Activated T-helper 1 cell treated with anti-CD3 and anti-CD28 coated beads, Interleukin-12 subunit alpha, Interleukin-12 subunit beta, Interleukin-2, Interleukin-4 antibody, amounts not matched to agents 30 ng/mL and 10 ng/mL and 1 ng/mL, durations not matched to agents 14 hours and 24 hours and 36 hours (primary cell): ENCODE measurements at regions of chr7 and their contacts with region 1.

Region 1: DNA sequence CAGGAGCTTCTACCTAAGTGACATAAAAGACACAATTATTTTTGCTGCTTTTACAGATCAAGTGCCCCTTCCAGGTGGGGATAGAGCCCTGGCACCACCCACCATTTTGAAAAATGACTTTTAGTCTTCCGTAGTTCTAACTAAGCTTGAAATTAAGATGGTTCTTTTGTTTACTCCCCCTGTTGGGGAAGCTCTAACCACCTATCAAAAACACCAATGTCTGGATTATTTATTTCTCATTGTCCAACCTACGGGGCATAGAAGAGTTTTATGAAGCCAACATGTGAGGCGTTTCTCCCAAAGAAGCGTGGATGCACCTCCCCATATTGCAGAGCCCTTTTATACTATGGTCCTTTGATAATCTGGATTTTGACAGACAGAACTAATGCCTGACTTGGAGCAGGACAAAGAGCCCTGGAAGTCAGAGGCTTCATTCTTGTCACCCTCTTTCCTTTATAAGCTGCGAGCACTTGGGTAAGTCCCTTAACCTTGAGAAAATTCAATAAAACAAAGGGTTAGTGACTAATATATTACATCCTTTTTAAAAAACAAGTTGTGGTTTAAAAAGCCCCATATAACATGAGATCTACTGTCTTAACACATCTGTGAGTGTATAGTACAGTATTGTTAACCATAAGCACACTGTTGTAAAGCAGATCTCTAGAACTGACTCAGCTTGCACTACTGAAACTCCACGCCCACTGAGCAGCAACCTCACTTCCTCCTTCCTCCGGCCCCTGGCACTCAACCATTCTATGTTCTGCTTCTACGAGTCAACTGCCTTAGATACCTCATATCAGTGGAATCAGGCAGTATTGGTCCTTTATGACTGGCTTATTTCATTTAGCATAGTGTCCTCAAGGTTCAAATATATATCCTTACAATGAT is 67.5 kb downstream of the ATXN7L1 start:
- DNase-seq: peak; percentile 77
- H3K4me3 Mint-ChIP-seq: peak overlapping the region; percentile 45
- H3K27ac Mint-ChIP-seq: peak overlapping the region; percentile 75
- H3K4me1 Mint-ChIP-seq: peaks cover 77% of the 10 kb centered on the region
- H3K27me3 Mint-ChIP-seq: peaks cover 1% of the 10 kb centered on the region

Region 2: DNA sequence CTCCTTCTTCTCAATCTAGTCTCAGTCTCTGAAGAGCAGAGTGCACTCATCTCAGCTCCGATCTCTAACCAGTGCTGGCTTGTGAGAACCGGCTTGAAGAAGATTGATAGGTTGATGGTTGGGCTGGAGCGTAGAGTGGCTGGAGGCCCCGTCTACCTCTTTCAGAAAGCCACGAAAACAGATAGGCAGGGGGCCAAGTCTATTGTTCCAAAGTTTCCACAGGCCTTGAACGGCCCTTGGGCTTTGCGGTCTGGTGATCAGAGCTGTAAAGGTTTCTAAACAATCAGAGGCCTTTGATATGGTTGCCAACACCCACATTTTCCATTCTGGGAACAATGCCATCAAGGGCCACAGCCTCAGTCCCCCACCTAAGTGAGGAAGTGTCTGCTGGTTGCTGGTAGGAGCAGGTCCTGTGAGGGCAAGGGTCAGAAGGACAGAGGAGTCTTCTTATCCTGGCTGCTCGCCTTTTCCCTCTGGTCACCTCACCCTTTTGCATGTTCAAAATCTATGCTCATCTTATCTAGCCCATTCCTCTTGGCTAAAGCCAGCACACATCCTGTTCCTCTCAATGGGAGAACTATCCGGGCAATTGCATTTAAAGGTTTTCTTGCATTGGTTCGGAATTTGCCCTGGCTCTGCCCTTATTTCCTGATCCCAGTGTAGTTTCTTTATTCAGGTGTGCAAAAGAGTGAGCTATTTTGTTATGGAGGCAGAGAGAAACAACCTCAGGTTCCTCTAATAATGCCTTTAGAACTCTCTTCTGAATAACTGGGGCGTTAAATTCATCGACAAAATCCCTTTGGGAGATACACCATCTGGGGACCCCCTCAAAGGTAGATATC is 865.2 kb before region 1 on chr7:
- intact Hi-C with region 1: loop called (anchors 1 kb)
- DNase-seq: peak; percentile 70
- H3K4me3 Mint-ChIP-seq: peak overlapping the region; percentile 96
- H3K27ac Mint-ChIP-seq: peak overlapping the region; percentile 100
- H3K4me1 Mint-ChIP-seq: peaks cover 72% of the 10 kb centered on the region
- H3K27me3 Mint-ChIP-seq: peaks cover 2% of the 10 kb centered on the region

Region 3: DNA sequence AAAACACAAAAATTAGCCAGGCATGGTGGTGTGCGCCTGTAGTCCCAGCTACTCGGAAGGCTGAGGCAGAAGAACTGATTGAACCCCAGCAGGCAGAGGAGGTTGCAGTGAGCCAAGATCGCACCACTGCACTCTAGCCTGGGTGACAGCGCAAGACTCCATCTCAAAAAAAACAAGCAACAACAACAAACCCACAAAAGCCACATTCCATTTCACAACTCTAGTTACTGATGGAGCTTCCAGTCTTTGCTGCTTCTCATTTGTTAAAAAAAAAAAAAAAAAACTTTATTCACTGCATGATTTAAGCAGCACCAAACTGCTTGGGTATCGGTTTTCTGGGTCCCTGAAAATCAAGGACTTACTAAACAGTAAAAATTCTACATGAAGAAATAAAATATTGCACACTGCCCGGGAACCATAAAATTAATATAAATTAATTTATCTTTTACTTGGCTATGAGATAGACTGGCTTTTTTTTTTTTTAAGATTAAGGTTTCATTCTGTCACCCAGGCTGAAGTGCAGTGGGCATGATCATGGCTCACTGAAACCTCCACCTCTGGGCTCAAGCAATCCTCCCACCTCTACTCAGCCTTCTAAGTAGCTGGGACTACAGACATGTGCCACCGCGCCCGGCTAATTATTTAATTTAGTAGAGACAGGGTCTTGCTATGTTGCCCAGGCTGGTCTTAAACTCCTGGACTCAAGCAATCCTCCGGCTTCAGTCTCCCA is 462.2 kb before region 1 on chr7:
- intact Hi-C with region 1: no loop called
- DNase-seq: peak; percentile 35
- H3K4me3 Mint-ChIP-seq: peak overlapping the region; percentile 42
- H3K27ac Mint-ChIP-seq: peak overlapping the region; percentile 52
- H3K4me1 Mint-ChIP-seq: peaks cover 40% of the 10 kb centered on the region
- H3K27me3 Mint-ChIP-seq: no peaks in the 10 kb centered on the region

Region 4: DNA sequence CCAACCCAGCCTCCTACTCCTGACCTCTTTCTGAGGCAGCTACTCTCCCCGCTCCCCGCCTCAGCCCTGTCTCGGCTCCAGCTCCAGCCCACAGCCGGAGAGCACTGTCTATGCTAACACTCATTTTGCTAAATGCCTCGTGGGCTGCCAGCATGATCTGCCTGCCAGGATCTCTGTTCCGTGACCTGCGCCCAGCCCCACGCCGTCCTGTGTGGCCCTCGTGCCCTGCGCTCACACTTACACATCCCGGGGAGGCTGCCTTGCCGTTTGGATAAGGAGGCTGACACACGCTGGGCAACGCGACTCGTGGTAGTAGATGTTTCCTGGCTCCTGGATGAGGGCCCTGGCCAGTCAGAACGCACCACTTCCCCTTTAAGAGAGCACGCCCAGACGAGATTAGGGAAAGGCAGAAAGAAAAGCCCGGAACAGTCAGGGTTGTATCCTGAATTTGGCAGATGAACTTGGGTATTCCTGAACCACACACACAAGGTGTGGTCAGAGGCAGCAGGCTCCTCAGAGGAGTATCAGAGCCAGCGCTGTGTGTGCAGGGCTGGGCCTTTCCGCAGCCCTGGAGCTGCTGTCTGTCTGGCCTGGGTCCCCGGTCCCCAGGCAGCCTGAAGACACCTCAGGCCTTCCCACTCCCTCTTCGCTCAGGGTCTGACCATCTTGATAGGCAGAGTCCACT is 130.0 kb before region 1 on chr7:
- intact Hi-C with region 1: loop called (anchors 2 kb)
- DNase-seq: no peak
- H3K4me3 Mint-ChIP-seq: peak overlapping the region; percentile 89
- H3K27ac Mint-ChIP-seq: peak overlapping the region; percentile 93
- H3K4me1 Mint-ChIP-seq: peaks cover 57% of the 10 kb centered on the region
- H3K27me3 Mint-ChIP-seq: peaks cover 1% of the 10 kb centered on the region

Region 5: GRCh38 chr7:105849122-105849855 is 40.3 kb after region 1 on chr7:
- intact Hi-C with region 1: loop called (anchors 1 kb)
- DNase-seq: peak; percentile 70
- H3K4me3 Mint-ChIP-seq: peak overlapping the region; percentile 60
- H3K27ac Mint-ChIP-seq: peak overlapping the region; percentile 80
- H3K4me1 Mint-ChIP-seq: peaks cover 59% of the 10 kb centered on the region
- H3K27me3 Mint-ChIP-seq: peaks cover under 1% of the 10 kb centered on the region

Region 6: GRCh38 chr7:106022193-106022821 is 213.4 kb after region 1 on chr7:
- intact Hi-C with region 1: loop called (anchors 1 kb)
- DNase-seq: peak; percentile 56
- H3K4me3 Mint-ChIP-seq: peak overlapping the region; percentile 37
- H3K27ac Mint-ChIP-seq: peak overlapping the region; percentile 77
- H3K4me1 Mint-ChIP-seq: peaks cover 49% of the 10 kb centered on the region
- H3K27me3 Mint-ChIP-seq: peaks cover 13% of the 10 kb centered on the region

Region 7: GRCh38 chr7:106405697-106406141 is 596.8 kb after region 1 on chr7:
- intact Hi-C with region 1: loop called (anchors 5 kb)
- DNase-seq: no peak
- H3K4me3 Mint-ChIP-seq: no peak overlapping the region
- H3K27ac Mint-ChIP-seq: peak overlapping the region; percentile 30
- H3K4me1 Mint-ChIP-seq: peaks cover 23% of the 10 kb centered on the region
- H3K27me3 Mint-ChIP-seq: peaks cover 23% of the 10 kb centered on the region